Mammary epithelial cell (primary cell): ENCODE measurements at regions of chr2 and their contacts with region 1.

Region 1: GRCh38 chr2:191501561-191502168 is 176.3 kb upstream of the NABP1 start:
- DNase-seq: peak; percentile 40
- H3K4me3 ChIP-seq: no peak overlapping the region
- H3K27ac ChIP-seq: no peak overlapping the region
- H3K4me1 ChIP-seq: peaks cover 8% of the 10 kb centered on the region
- H3K27me3 ChIP-seq: no peaks in the 10 kb centered on the region
- CTCF ChIP-seq: peak; percentile 58 to 71

Region 2: DNA sequence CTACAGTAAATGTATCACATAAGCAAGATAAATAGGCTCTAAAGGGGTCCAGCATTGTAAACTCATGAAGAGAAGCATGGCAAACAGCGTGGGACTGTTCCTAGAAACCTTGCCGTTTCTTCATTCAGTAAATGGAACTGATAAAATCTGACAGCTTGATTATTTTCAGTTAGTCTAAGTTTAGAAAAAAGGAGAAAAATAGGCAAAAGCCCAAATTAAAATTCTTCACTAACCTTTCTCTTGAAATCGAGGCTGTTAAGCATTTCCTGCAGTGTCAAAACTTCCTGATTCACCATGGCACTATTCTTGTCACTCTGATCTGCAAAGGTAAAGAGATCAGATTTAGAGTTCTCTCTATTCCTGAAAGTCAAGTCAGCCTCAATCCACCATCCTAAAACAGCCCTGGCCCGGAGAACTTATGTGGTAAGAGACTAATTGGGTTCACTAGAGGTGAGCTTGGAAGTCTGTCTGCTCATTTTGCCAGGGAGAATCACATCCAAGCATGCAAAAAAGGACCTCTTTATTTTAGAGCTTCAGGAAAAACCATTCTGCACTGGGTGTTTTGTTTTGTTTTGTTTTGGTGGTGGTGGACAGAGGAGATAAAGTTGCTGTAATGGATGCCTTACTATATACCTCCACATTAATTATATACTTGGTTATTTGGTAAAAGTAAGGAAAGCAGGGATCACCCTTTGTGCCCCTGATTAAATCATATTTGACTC is 435.3 kb before region 1 on chr2:
- CTCF ChIA-PET with region 1: no interaction called
- dilution Hi-C with region 1: no loop called
- in situ Hi-C with region 1: loop called (anchors 10 to 25 kb)
- intact Hi-C with region 1: no loop called
- DNase-seq: no peak
- H3K4me3 ChIP-seq: no peak overlapping the region
- H3K27ac ChIP-seq: no peak overlapping the region
- H3K4me1 ChIP-seq: no peaks in the 10 kb centered on the region
- H3K27me3 ChIP-seq: no peaks in the 10 kb centered on the region
- CTCF ChIP-seq: no peak

Region 3: GRCh38 chr2:191245046-191245868 is 256.4 kb before region 1 on chr2 and contains the start of gene MYO1B:
- CTCF ChIA-PET with region 1: no interaction called
- dilution Hi-C with region 1: loop called (anchors 25 kb)
- in situ Hi-C with region 1: no loop called
- intact Hi-C with region 1: loop called (anchors 1 kb)
- DNase-seq: peak; percentile 89
- H3K4me3 ChIP-seq: peak within 1 kb of the TSS; percentile 62 to 95 (median 79)
- H3K27ac ChIP-seq: peak within 1 kb of the TSS; percentile 88
- H3K4me1 ChIP-seq: peaks cover 31% of the 10 kb centered on the region
- H3K27me3 ChIP-seq: no peaks in the 10 kb centered on the region
- CTCF ChIP-seq: peak; percentile 33 to 71
- total RNA-seq, gene MYO1B: 165 to 435 TPM

Region 4: DNA sequence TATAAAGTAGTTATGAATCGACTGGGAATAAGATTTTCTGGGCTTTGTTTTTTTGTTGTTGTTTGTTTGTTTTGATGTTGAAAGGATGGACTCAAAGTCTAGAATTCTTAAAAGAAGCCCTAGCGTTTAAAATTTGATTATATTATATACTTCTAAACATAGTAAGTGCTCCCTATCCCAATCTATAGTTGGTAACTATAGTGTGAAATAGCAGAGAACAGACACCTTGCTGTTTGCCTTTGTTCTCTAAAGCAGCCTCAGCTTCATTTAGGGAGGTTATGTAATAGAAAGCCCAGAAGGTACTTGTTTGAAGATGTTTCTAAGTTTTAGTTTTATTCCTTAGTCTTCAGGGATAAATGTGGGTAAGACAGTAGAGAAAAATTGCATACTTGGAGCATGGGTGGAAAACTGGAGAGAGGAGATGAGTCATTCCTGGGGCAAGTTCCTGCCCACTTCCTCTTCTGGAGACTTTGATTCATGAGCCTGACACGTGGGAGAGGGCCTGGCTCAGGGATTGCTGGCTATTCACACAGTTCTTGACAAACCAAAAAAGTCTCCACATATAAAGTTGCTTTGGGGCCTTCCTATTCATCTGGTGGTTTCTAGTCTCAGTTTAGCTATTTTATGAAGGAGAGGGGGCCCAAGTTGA is 124.6 kb before region 1 on chr2:
- CTCF ChIA-PET with region 1: no interaction called
- dilution Hi-C with region 1: no loop called
- in situ Hi-C with region 1: no loop called
- intact Hi-C with region 1: loop called (anchors 1 kb)
- DNase-seq: peak; percentile 86
- H3K4me3 ChIP-seq: peak overlapping the region in 1 of 3 experiments; percentile 6
- H3K27ac ChIP-seq: peak overlapping the region; percentile 78
- H3K4me1 ChIP-seq: peaks cover 20% of the 10 kb centered on the region
- H3K27me3 ChIP-seq: no peaks in the 10 kb centered on the region
- CTCF ChIP-seq: no peak

Region 5: GRCh38 chr2:191428141-191428540 is 73.5 kb before region 1 on chr2:
- CTCF ChIA-PET with region 1: no interaction called
- dilution Hi-C with region 1: loop called (anchors 5 kb)
- in situ Hi-C with region 1: no loop called
- intact Hi-C with region 1: no loop called
- DNase-seq: no peak
- H3K4me3 ChIP-seq: no peak overlapping the region
- H3K27ac ChIP-seq: no peak overlapping the region
- H3K4me1 ChIP-seq: no peaks in the 10 kb centered on the region
- H3K27me3 ChIP-seq: no peaks in the 10 kb centered on the region
- CTCF ChIP-seq: no peak

Region 6: GRCh38 chr2:191555092-191555742 is 53.6 kb after region 1 on chr2:
- CTCF ChIA-PET with region 1: no interaction called
- dilution Hi-C with region 1: no loop called
- in situ Hi-C with region 1: no loop called
- intact Hi-C with region 1: no loop called
- DNase-seq: peak; percentile 80
- H3K4me3 ChIP-seq: peak overlapping the region in 2 of 3 experiments; percentile 35
- H3K27ac ChIP-seq: no peak overlapping the region
- H3K4me1 ChIP-seq: peaks cover 9% of the 10 kb centered on the region
- H3K27me3 ChIP-seq: no peaks in the 10 kb centered on the region
- CTCF ChIP-seq: peak; percentile 64 to 78

Region 7: DNA sequence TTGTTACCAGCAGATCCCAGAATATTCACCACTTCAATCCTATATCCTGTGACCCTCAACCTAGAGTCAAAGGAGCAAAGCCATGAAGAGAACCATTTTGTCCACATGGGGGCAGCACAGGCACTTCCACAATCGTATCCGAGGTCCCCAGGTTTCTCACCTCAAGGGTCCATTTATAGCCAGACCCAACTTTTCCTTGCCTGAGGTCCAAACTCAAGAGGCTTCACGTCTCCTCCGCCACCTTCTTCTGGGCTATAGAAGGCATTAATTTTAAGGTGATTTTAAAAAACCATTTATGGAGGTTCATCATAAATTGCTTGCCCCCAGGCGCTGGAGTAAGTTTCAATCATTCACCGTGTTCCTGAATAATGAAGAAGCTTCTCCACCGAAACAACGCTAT is 64.7 kb after region 1 on chr2:
- CTCF ChIA-PET with region 1: no interaction called
- dilution Hi-C with region 1: no loop called
- in situ Hi-C with region 1: no loop called
- intact Hi-C with region 1: no loop called
- DNase-seq: peak; percentile 38
- H3K4me3 ChIP-seq: no peak overlapping the region
- H3K27ac ChIP-seq: no peak overlapping the region
- H3K4me1 ChIP-seq: no peaks in the 10 kb centered on the region
- H3K27me3 ChIP-seq: no peaks in the 10 kb centered on the region
- CTCF ChIP-seq: peak; percentile 80 to 90